ENCODE measurements at regions of chr5 and their contacts with region 1.

Region 1: GRCh38 chr5:16160706-16161105 is 18.9 kb downstream of the MARCHF11 start:
- DNase-seq: no peak
- H3K4me3 Mint-ChIP-seq: no peak overlapping the region
- H3K27ac Mint-ChIP-seq: no peak overlapping the region
- H3K4me1 Mint-ChIP-seq: no peaks in the 10 kb centered on the region
- H3K27me3 Mint-ChIP-seq: peaks cover 1% of the 10 kb centered on the region

Region 2: GRCh38 chr5:16120579-16120978 is 40.1 kb before region 1 on chr5:
- CTCF ChIA-PET with region 1: no interaction called
- POLR2A ChIA-PET with region 1: no interaction called
- DNase-seq: no peak
- H3K4me3 Mint-ChIP-seq: no peak overlapping the region
- H3K27ac Mint-ChIP-seq: no peak overlapping the region
- H3K4me1 Mint-ChIP-seq: no peaks in the 10 kb centered on the region
- H3K27me3 Mint-ChIP-seq: no peaks in the 10 kb centered on the region

Region 3: DNA sequence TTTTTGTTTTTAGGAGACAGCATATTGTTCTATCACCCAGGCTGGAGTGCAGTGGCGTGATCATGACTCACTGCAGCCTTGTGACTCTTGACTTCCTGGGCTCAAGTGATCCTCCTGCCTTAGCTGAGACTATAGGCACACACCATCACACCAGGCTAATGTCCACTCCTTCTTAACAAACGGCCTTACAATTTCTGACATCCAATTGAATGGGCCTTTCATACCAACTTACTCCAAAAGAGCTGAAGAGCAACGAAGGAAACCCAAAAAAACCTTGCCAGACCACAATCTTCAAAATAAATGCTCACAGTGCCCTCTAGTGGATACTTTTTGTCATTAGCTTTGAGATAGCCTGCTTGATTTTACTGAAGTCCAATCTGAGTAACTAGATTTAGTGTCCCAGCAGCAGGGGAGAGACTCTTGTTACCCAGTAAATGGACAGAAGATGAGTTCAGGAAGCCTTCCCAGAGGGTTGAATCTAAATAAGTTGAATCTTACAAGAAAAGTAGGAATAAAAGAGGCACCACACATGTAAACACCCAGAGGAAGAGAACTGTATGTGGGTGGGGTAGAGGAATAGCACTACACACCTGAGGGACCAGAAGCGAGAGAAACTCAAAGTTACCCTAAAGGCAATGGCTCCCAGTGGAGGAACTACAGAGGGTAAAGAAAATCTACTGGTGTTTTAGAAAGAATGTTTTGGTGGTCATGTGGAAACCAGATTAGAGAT is 295.6 kb after region 1 on chr5:
- CTCF ChIA-PET with region 1: interaction called, 48 read pairs
- POLR2A ChIA-PET with region 1: no interaction called
- DNase-seq: peak; percentile 49
- H3K4me3 Mint-ChIP-seq: peak overlapping the region; percentile 28
- H3K27ac Mint-ChIP-seq: peak overlapping the region; percentile 80
- H3K4me1 Mint-ChIP-seq: peaks cover 51% of the 10 kb centered on the region
- H3K27me3 Mint-ChIP-seq: no peaks in the 10 kb centered on the region